Activated CD4-positive, alpha-beta memory T cell treated with anti-CD3 and anti-CD28 coated beads for 36 hours (primary cell): ENCODE measurements at regions of chr18 and their contacts with region 1.

Region 1: DNA sequence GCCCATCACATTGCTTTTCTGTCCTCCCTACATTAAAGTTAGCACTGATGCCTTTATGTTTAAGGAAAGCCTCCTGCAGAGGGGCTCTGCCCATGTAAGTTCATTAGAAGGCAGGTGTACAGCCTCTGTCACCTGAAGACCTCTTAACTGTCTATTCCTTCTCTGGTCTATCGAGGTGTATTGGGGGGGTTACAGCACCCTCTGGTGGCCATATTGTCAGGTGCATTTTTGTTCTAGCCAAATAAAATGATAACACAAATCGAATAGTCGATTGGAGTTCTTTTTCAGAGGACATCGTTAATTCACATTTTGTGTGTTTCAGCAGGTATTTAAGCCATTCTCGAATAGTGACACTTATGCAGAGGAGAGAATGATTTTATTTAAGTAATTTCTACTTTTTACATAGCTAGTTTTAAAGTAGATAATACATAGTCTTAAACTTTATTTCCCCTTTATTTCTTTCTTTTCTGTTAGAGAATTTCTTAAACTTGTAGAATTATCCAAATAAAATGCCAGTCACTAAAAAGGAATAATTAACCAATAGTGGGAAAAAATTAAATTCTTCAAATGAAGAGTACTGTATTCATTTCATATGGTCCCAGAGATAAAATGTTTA is 136.8 kb downstream of the NEDD4L start:
- DNase-seq: peak; percentile 71
- H3K4me3 Mint-ChIP-seq: no peak overlapping the region
- H3K27ac Mint-ChIP-seq: no peak overlapping the region
- H3K4me1 Mint-ChIP-seq: no peaks in the 10 kb centered on the region
- H3K27me3 Mint-ChIP-seq: peaks cover 2% of the 10 kb centered on the region

Region 2: DNA sequence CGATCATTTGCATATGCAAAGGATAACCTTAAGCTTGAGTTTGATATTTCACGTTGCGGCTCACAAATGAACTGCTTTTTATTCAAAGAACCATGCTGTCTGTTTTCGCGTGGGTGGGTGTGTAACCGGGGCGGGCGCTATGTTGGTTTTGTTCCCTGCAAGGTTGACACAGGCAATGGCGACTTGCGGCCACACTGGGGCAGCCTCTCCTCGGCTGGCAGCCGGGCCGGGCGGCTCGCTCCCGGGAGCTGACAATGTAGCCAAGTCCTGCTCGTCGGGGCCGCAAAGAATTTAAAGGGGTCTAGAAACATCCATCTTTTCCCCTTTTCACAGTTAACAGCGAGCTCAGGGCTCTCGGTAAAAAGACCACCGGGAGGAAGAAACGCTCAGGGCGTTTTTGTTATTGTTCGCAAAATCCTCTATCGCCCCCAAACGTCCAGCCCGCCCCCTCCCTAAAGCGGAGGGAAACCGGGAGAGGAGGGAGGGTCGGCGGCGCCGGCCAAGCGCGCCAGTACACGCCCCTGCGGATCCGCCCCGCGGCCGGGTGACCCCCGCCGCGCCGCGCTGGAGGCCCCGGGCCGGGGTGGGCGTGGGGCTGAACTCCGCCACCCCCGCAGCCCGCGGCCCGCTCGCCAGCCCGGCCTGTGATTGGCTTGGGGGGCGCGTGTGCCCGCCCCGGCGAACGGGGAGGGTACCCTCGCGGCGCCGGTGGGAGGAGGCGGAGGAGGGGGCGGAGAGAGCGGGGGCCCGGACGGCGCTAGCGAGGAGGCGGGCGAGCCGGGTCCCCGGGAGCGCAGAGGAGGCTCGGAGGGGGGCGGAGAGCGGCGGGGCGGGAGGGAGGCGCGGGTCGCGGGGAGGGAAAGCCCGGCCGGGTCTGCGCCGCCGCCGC is 137.1 kb before region 1 on chr18 and contains the start of gene NEDD4L:
- CTCF ChIA-PET with region 1: interaction called, 3 read pairs
- POLR2A ChIA-PET with region 1: no interaction called
- intact Hi-C with region 1: loop called (anchors 1 kb)
- DNase-seq: peak; percentile 89
- H3K4me3 Mint-ChIP-seq: peak within 1 kb of the TSS; percentile 86
- H3K27ac Mint-ChIP-seq: peak within 1 kb of the TSS; percentile 26
- H3K4me1 Mint-ChIP-seq: peaks cover 20% of the 10 kb centered on the region
- H3K27me3 Mint-ChIP-seq: peaks cover 25% of the 10 kb centered on the region
- total RNA-seq, gene NEDD4L: 3.4 to 3.8 TPM

Region 3: DNA sequence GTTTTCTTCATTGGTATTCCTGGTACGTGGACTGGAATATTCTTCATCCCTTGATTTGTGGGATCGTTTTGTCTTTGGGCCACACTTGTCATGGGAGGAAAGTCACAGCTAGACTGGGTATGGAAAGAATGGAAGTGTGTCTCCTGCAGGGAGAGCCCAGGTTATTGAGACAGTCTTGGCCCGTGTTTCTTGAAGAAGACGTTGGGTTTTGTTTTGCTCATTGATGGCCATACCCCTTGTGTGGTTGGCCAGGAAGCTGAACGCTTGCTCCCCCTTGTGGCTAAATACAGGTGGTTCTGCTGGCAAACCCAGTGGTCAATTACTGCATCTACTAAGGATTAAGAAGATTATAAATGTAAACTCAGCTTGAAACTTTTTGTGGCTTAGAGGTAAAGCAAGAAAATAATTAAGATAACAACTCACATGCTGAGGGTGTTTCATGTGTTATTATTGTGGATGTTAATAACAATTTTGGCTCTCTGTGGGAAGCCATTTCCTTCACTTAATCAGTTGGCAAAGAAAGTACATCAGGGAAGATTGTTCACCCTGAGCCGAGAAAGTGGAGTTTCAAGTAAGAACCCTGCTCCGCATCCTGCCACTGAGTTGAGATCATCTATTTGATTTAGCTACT is 45.0 kb before region 1 on chr18:
- CTCF ChIA-PET with region 1: interaction called, 3 read pairs
- POLR2A ChIA-PET with region 1: no interaction called
- intact Hi-C with region 1: loop called (anchors 5 kb)
- DNase-seq: peak; percentile 69
- H3K4me3 Mint-ChIP-seq: no peak overlapping the region
- H3K27ac Mint-ChIP-seq: no peak overlapping the region
- H3K4me1 Mint-ChIP-seq: peaks cover 9% of the 10 kb centered on the region
- H3K27me3 Mint-ChIP-seq: peaks cover 14% of the 10 kb centered on the region

Region 4: DNA sequence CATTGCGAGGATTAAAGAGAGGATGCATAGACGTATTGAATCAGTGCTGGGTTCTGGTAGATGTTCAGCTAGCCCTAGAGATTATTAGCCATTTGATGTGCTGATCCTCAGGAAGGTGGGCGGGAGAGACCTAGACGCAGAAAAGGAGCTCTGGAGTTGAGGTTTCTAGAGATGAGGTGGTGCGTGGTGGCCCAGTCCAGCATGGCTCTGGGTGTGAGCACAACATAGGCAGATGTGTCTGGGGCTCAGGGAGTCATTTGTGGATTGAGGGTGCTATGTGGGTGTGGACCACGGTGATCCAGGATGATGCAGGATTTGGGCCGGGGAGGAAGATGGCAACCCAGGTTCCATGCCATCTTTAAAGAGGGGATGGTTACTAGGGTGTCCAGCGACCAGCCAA is 34.7 kb before region 1 on chr18:
- CTCF ChIA-PET with region 1: no interaction called
- POLR2A ChIA-PET with region 1: no interaction called
- intact Hi-C with region 1: no loop called
- DNase-seq: no peak
- H3K4me3 Mint-ChIP-seq: no peak overlapping the region
- H3K27ac Mint-ChIP-seq: no peak overlapping the region
- H3K4me1 Mint-ChIP-seq: no peaks in the 10 kb centered on the region
- H3K27me3 Mint-ChIP-seq: peaks cover 4% of the 10 kb centered on the region

Region 5: GRCh38 chr18:58195278-58195765 is 14.5 kb after region 1 on chr18:
- CTCF ChIA-PET with region 1: interaction called, 24 read pairs
- POLR2A ChIA-PET with region 1: no interaction called
- intact Hi-C with region 1: no loop called
- DNase-seq: peak; percentile 24
- H3K4me3 Mint-ChIP-seq: peak overlapping the region; percentile 59
- H3K27ac Mint-ChIP-seq: no peak overlapping the region
- H3K4me1 Mint-ChIP-seq: peaks cover 21% of the 10 kb centered on the region
- H3K27me3 Mint-ChIP-seq: peaks cover 14% of the 10 kb centered on the region

Region 6: GRCh38 chr18:58241877-58242276 is 61.0 kb after region 1 on chr18:
- CTCF ChIA-PET with region 1: no interaction called
- POLR2A ChIA-PET with region 1: no interaction called
- intact Hi-C with region 1: no loop called
- DNase-seq: no peak
- H3K4me3 Mint-ChIP-seq: no peak overlapping the region
- H3K27ac Mint-ChIP-seq: no peak overlapping the region
- H3K4me1 Mint-ChIP-seq: no peaks in the 10 kb centered on the region
- H3K27me3 Mint-ChIP-seq: no peaks in the 10 kb centered on the region

Region 7: DNA sequence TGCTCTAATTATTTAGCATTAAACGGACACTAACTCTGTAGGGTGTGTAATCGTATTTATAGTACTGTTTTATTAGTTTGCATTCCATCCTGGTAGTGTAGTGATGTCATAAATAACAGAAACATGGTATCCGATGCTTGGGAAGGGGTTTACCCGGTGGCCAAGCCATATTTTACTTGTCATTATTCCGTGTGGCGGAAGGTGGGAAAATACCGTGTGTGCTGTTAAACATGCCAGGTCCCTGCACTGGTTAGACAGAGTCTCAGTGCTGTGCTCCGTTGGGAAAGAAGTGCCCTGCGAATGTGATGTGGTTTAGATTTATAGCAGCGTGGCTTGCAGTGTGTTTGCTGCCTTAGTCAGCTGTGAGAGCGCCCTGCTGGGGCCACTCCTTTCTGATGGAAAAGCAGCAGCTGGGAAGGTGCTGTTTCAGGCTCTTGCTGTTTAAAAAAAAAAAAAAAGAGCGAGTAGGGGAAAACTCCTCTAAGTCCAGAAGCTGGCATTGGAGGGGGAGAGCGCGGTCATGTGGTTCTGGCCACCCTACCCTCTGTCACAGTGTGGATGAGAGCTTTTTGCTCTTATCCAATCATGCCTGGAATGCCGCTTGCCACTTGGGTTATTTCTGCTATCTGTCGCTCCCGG is 74.1 kb after region 1 on chr18:
- CTCF ChIA-PET with region 1: interaction called, 11 read pairs
- POLR2A ChIA-PET with region 1: no interaction called
- intact Hi-C with region 1: no loop called
- DNase-seq: no peak
- H3K4me3 Mint-ChIP-seq: no peak overlapping the region
- H3K27ac Mint-ChIP-seq: no peak overlapping the region
- H3K4me1 Mint-ChIP-seq: no peaks in the 10 kb centered on the region
- H3K27me3 Mint-ChIP-seq: no peaks in the 10 kb centered on the region

Region 8: GRCh38 chr18:58335821-58336220 is 155.0 kb after region 1 on chr18:
- CTCF ChIA-PET with region 1: no interaction called
- POLR2A ChIA-PET with region 1: no interaction called
- intact Hi-C with region 1: no loop called
- DNase-seq: no peak
- H3K4me3 Mint-ChIP-seq: no peak overlapping the region
- H3K27ac Mint-ChIP-seq: no peak overlapping the region
- H3K4me1 Mint-ChIP-seq: no peaks in the 10 kb centered on the region
- H3K27me3 Mint-ChIP-seq: no peaks in the 10 kb centered on the region